A673 (cell line): ENCODE measurements at regions of chr1 and their contacts with region 1.

Region 1: GRCh38 chr1:241985787-241986186 is 13.1 kb downstream of the MAP1LC3C start:
- DNase-seq: peak; percentile 30
- H3K4me3 ChIP-seq: no peak overlapping the region
- H3K27ac ChIP-seq: no peak overlapping the region
- H3K4me1 ChIP-seq: no peaks in the 10 kb centered on the region
- H3K27me3 ChIP-seq: no peaks in the 10 kb centered on the region
- CTCF ChIP-seq: peak; percentile 46

Region 2: GRCh38 chr1:241447031-241447644 is 538.6 kb before region 1 on chr1:
- CTCF ChIA-PET with region 1: no interaction called
- POLR2A ChIA-PET with region 1: no interaction called
- intact Hi-C with region 1: no loop called
- DNase-seq: peak; percentile 8
- H3K4me3 ChIP-seq: no peak overlapping the region
- H3K27ac ChIP-seq: no peak overlapping the region
- H3K4me1 ChIP-seq: no peaks in the 10 kb centered on the region
- H3K27me3 ChIP-seq: no peaks in the 10 kb centered on the region
- CTCF ChIP-seq: no peak

Region 3: DNA sequence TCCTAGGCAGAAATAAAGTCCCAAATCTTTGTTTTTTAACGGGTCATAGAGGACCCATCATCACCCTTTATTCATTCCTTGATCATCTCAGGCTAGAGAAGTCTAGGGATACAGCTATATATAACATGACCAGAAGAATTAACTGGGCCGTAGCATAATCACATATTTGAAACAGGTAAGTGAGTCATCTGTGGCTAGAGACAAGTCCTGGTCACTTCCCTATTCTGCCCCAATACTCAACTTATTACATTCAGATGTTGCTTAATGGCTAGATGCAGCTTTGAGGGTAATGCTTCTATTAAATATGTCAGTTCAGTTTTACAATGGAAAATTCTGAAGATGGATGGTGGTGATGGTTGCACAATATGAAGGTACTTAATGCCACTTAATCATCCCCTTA is 90.8 kb before region 1 on chr1:
- CTCF ChIA-PET with region 1: no interaction called
- POLR2A ChIA-PET with region 1: no interaction called
- intact Hi-C with region 1: loop called (anchors 5 kb)
- DNase-seq: no peak
- H3K4me3 ChIP-seq: no peak overlapping the region
- H3K27ac ChIP-seq: no peak overlapping the region
- H3K4me1 ChIP-seq: no peaks in the 10 kb centered on the region
- H3K27me3 ChIP-seq: no peaks in the 10 kb centered on the region
- CTCF ChIP-seq: no peak